HepG2 (cell line): ENCODE measurements at regions of chr7 and their contacts with region 1.

Region 1: GRCh38 chr7:78716876-78717275 is 736.6 kb downstream of the MAGI2 start:
- DNase-seq: peak; percentile 1
- ATAC-seq: peak; percentile 58
- H3K4me3 ChIP-seq: no peak overlapping the region
- H3K27ac ChIP-seq: no peak overlapping the region
- H3K4me1 ChIP-seq: peaks cover 7% of the 10 kb centered on the region
- H3K27me3 ChIP-seq: no peaks in the 10 kb centered on the region
- CTCF ChIP-seq: no peak
- EP300 ChIP-seq: no peak
- POLR2A ChIP-seq: no peak
- RAD21 ChIP-seq: no peak

Region 2: GRCh38 chr7:78543976-78544375 is 172.9 kb before region 1 on chr7:
- CTCF ChIA-PET with region 1: no interaction called
- POLR2A ChIA-PET with region 1: no interaction called
- in situ Hi-C with region 1: no loop called
- intact Hi-C with region 1: loop called (anchors 10 kb)
- DNase-seq: no peak
- ATAC-seq: no peak
- H3K4me3 ChIP-seq: no peak overlapping the region
- H3K27ac ChIP-seq: no peak overlapping the region
- H3K4me1 ChIP-seq: no peaks in the 10 kb centered on the region
- H3K27me3 ChIP-seq: no peaks in the 10 kb centered on the region
- CTCF ChIP-seq: no peak
- EP300 ChIP-seq: no peak
- POLR2A ChIP-seq: no peak
- RAD21 ChIP-seq: no peak

Region 3: DNA sequence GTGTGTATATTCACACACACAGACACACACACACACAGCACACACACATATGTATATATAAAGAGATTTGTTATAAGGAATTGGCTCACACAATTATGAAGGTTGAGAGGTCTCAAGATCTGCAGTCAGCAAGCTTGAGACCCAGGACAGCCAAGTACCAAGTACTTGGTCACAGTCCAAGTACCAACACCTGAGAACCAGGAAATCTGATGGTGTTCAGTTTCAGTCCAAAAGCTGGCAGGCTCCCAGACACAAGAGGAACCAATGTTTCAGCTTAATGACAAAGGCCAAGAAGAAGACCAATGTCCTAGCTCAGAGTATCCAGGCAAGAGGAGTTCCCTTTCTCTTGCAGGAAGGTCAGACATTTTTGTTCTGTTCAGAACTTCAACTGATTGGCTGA is 43.6 kb before region 1 on chr7:
- CTCF ChIA-PET with region 1: no interaction called
- POLR2A ChIA-PET with region 1: no interaction called
- in situ Hi-C with region 1: no loop called
- intact Hi-C with region 1: no loop called
- DNase-seq: no peak
- ATAC-seq: no peak
- H3K4me3 ChIP-seq: no peak overlapping the region
- H3K27ac ChIP-seq: no peak overlapping the region
- H3K4me1 ChIP-seq: no peaks in the 10 kb centered on the region
- H3K27me3 ChIP-seq: no peaks in the 10 kb centered on the region
- CTCF ChIP-seq: no peak
- EP300 ChIP-seq: no peak
- POLR2A ChIP-seq: no peak
- RAD21 ChIP-seq: no peak

Region 4: DNA sequence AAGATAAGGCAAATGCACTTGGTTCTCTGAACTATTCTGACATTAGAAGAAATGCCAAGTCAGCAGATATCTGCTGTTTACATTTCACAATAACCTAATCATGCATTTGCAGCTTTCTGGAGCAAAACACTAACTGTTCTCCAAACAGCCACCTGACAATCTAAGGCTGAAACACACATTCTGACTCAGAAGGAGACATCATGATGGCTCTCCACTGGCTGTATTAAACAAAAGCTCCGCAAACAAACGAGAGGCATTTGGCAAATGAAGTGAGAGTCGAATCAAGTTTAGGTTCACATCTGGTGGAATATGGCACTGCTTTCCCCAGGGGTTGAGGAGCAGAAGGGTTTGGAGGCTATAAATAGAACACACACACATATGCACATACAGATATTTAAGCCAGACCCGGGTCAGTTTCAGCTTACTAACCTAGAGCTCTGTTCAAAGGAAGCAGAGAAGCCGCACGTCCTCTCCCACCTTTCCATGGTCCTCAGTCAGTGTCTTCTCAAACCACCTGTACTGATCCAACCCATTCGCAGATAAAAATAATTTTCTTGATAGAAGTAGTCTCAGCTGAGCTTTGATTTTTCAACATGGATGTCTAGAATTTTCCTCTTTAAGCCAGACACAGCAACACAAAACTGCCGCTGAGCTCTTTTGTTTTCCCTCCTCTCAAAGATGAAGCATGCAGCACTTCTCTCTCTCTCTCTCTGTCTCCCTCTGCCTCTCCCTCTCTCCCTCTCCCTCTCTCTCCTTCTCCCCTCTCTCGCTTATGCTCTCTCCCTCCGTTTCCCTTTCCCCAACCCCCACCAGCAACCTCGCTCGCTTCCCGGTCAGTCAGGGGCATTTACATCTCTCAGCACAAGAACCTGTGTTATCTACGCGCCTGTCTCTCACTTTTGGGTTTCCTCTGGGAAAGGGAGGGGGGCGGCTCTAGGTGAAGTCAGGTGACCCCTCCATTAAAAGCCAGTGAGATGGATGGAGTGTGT is 53.8 kb after region 1 on chr7:
- CTCF ChIA-PET with region 1: no interaction called
- POLR2A ChIA-PET with region 1: no interaction called
- in situ Hi-C with region 1: no loop called
- intact Hi-C with region 1: no loop called
- DNase-seq: no peak
- ATAC-seq: no peak
- H3K4me3 ChIP-seq: no peak overlapping the region
- H3K27ac ChIP-seq: no peak overlapping the region
- H3K4me1 ChIP-seq: no peaks in the 10 kb centered on the region
- H3K27me3 ChIP-seq: no peaks in the 10 kb centered on the region
- CTCF ChIP-seq: no peak
- EP300 ChIP-seq: no peak
- POLR2A ChIP-seq: no peak
- RAD21 ChIP-seq: no peak

Region 5: GRCh38 chr7:79078273-79078672 is 361.4 kb after region 1 on chr7:
- CTCF ChIA-PET with region 1: no interaction called
- POLR2A ChIA-PET with region 1: no interaction called
- in situ Hi-C with region 1: no loop called
- intact Hi-C with region 1: no loop called
- DNase-seq: peak; percentile 32
- ATAC-seq: peak; percentile 83
- H3K4me3 ChIP-seq: no peak overlapping the region
- H3K27ac ChIP-seq: no peak overlapping the region
- H3K4me1 ChIP-seq: peaks cover 15% of the 10 kb centered on the region
- H3K27me3 ChIP-seq: no peaks in the 10 kb centered on the region
- CTCF ChIP-seq: no peak
- EP300 ChIP-seq: no peak
- POLR2A ChIP-seq: no peak
- RAD21 ChIP-seq: no peak